HepG2 (cell line): ENCODE measurements at regions of chr1 and their contacts with region 1.

Region 1: DNA sequence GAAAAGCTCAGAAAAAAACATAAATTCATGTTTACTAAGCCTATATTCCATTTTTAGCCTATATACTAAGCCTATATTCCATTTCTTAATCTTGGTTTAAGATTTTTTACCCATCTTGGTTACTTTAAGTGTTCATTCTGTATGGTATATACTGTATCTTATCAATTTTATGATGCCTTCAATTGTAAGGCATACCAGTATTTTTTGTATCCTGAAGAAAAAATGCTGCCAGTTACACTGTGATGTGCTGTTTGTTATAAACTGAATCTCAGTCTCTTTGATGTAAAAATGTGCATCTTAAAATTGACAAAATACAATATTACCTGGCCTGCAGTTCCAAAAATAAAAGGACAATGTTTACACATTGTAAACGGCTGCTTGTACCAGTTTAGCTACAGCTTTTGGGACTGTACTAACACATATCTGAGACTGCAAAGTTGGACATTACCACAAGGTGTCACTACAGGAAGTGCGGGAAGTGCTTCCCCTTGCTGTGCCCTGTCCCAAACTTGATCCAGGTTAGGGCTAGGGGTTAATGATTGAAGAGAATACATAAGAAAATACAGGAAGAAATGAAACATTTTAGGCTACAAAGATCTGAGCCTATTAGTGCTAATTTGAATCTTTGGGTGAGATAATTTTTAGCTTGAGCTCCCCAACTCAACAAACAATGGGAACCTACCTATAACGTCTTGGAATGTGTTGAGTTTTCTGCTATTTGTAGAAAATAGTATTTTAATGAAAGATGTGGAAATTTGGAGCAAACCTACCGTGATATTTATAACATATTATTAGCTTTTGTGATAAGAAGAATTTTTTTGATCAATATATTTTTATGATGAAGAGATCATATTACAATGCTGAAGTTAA is 108.9 kb downstream of the LBR start:
- DNase-seq: peak; percentile 54
- ATAC-seq: peak; percentile 96
- H3K4me3 ChIP-seq: no peak overlapping the region
- H3K27ac ChIP-seq: no peak overlapping the region
- H3K4me1 ChIP-seq: no peaks in the 10 kb centered on the region
- H3K27me3 ChIP-seq: no peaks in the 10 kb centered on the region
- CTCF ChIP-seq: peak; percentile 82
- EP300 ChIP-seq: no peak
- POLR2A ChIP-seq: no peak
- RAD21 ChIP-seq: peak; percentile 37

Region 2: DNA sequence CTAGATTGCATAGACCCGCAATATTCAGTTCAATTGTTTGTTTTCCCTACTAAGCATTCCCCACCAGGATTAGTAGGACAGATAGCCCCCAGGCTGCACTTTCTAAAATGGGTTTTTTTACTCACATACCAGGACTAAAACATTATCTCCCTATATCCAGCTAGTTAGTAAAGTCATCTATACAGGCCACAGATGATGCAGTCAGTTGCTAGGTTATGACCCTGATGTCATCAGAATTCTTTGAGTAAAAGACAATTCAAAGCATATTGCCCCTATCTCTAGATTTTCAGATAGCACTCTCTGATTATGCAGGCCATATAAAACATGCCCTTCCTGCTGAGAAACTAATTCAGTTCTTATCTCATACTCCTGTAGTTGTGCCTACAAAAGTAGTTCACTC is 94.7 kb before region 1 on chr1:
- CTCF ChIA-PET with region 1: no interaction called
- POLR2A ChIA-PET with region 1: no interaction called
- in situ Hi-C with region 1: no loop called
- intact Hi-C with region 1: no loop called
- DNase-seq: no peak
- ATAC-seq: no peak
- H3K4me3 ChIP-seq: no peak overlapping the region
- H3K27ac ChIP-seq: no peak overlapping the region
- H3K4me1 ChIP-seq: peaks cover 36% of the 10 kb centered on the region
- H3K27me3 ChIP-seq: no peaks in the 10 kb centered on the region
- CTCF ChIP-seq: no peak
- EP300 ChIP-seq: no peak
- POLR2A ChIP-seq: no peak
- RAD21 ChIP-seq: no peak

Region 3: DNA sequence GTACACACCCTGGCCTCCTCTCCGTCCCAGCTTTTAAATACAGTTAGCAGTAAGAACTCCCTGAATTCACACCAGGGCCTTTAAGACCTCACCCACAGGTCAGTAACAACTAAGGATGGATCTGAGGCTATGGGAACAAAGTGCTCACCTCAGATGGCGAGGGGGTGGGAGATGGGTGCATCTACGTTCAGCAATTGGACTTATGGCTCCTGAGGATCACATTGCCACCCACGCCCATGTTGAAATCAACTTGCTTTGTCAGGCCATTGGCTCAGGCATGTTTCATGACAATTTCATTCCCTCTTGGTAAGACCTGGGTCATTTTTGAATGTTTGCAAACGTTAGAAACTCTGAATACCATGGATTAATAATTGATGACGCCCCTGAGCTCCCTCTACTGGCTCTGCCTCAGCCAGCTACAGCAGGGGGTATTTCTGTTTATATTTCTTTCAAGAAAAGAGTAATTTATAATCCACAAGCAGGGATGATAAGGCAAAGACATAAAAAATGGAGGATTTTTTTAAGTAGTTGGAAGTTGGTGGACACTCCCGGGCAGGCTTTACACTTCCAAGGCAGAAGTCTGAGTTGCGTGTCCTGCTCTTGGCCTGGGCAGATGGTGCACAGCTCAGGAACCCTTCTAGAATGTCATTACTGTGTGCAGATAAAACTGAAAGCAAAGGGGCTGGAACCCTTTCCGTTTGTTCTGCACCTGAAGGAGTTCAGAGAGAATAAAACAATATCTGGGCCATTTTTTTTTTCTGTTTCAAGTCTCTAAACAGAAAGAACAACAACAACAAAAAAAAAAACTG is 122.6 kb after region 1 on chr1:
- CTCF ChIA-PET with region 1: interaction called, 3 read pairs
- POLR2A ChIA-PET with region 1: no interaction called
- in situ Hi-C with region 1: no loop called
- intact Hi-C with region 1: loop called (anchors 5 kb)
- DNase-seq: peak; percentile 87
- ATAC-seq: peak; percentile 81
- H3K4me3 ChIP-seq: peak overlapping the region; percentile 44 to 67 (median 48)
- H3K27ac ChIP-seq: peak overlapping the region; percentile 81
- H3K4me1 ChIP-seq: peaks cover 72% of the 10 kb centered on the region
- H3K27me3 ChIP-seq: no peaks in the 10 kb centered on the region
- CTCF ChIP-seq: peak; percentile 69
- EP300 ChIP-seq: peak in 1 of 2 experiments; percentile 31; a peak in 1 of 4 replicates
- POLR2A ChIP-seq: peak; percentile 25 to 58; a peak in 3 of 4 replicates
- RAD21 ChIP-seq: 0 out of 2 replicates have a peak, but pooled peaks have one; percentile 11

Region 4: GRCh38 chr1:225517697-225518096 is 198.8 kb after region 1 on chr1:
- CTCF ChIA-PET with region 1: no interaction called
- POLR2A ChIA-PET with region 1: no interaction called
- in situ Hi-C with region 1: no loop called
- intact Hi-C with region 1: no loop called
- DNase-seq: no peak
- ATAC-seq: no peak
- H3K4me3 ChIP-seq: no peak overlapping the region
- H3K27ac ChIP-seq: no peak overlapping the region
- H3K4me1 ChIP-seq: no peaks in the 10 kb centered on the region
- H3K27me3 ChIP-seq: no peaks in the 10 kb centered on the region
- CTCF ChIP-seq: no peak
- EP300 ChIP-seq: no peak
- POLR2A ChIP-seq: no peak
- RAD21 ChIP-seq: no peak

Region 5: GRCh38 chr1:225962440-225962975 is 643.6 kb after region 1 on chr1:
- CTCF ChIA-PET with region 1: no interaction called
- POLR2A ChIA-PET with region 1: no interaction called
- in situ Hi-C with region 1: loop called (anchors 25 kb)
- intact Hi-C with region 1: no loop called
- DNase-seq: peak; percentile 27
- ATAC-seq: peak; percentile 95
- H3K4me3 ChIP-seq: no peak overlapping the region
- H3K27ac ChIP-seq: no peak overlapping the region
- H3K4me1 ChIP-seq: peaks cover 19% of the 10 kb centered on the region
- H3K27me3 ChIP-seq: no peaks in the 10 kb centered on the region; a peak in 2 of 5 replicates
- CTCF ChIP-seq: peak; percentile 80
- EP300 ChIP-seq: no peak
- POLR2A ChIP-seq: no peak
- RAD21 ChIP-seq: peak; percentile 71

Region 6: DNA sequence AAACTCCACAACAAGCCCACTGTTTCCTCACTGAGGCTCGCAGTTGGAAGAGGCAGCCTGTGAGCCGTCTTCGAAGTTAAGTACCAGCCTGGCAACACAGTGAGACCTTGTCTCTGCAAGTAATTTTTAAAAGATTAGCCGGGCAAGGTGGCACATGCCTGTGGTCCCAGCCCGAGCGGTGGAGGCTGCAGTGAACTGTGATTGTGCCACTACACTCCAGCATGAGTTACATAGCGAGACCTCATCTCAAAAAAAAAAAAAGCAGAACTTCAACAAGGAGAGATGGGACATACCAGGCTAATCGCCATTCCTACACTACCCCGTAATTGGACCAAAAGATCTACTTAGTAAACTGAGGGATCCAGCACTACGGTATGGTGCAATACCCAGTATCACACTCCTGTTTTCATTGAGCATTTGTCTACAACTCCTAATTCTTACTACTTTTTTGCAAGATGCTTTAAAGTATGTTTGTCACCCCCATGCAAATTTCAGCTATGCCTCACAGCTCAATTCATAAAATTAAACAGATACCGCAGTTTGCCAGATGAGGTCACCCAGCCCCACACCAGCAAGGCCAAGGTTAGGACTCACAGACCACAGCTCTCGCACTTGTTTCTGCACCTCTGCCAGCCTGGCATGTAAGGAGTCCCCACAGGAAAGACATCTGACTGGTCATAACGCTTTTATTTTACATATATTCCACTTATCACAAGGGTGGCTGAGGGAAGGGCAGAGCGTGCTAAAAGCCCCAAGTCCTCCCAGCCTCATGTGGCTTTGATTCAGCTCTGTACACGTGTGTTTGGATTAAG is 659.2 kb after region 1 on chr1:
- CTCF ChIA-PET with region 1: interaction called, 8 read pairs
- POLR2A ChIA-PET with region 1: no interaction called
- in situ Hi-C with region 1: loop called (anchors 25 kb)
- intact Hi-C with region 1: loop called (anchors 2 kb)
- DNase-seq: no peak
- ATAC-seq: no peak
- H3K4me3 ChIP-seq: no peak overlapping the region
- H3K27ac ChIP-seq: no peak overlapping the region
- H3K4me1 ChIP-seq: no peaks in the 10 kb centered on the region
- H3K27me3 ChIP-seq: no peaks in the 10 kb centered on the region
- CTCF ChIP-seq: no peak
- EP300 ChIP-seq: no peak
- POLR2A ChIP-seq: no peak
- RAD21 ChIP-seq: no peak